ENCODE measurements at regions of chr2 and their contacts with region 1.

Region 1: DNA sequence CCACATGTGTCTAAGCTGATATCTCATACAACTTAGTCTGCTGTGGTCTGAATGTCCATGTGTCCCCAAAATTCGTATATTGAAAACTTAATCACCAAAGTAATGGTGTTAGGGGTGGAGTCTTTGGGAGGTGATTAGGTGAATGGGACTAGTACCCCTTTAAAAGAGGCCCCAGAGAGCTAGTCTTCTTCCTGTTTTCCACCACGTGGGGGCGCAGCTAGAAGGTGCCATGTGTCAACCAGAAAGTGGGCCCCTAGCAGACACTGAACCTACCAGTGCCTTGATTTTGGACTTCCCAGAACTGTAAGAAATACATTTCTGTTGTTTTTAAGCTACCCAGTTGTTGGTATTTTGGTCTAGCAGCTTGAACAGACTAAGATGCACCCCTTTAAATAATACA is 86.6 kb downstream of the ASB1 start:
- DNase-seq: peak; percentile 30
- H3K4me3 ChIP-seq: no peak overlapping the region
- H3K27ac ChIP-seq: no peak overlapping the region
- H3K4me1 ChIP-seq: no peaks in the 10 kb centered on the region
- H3K27me3 ChIP-seq: no peaks in the 10 kb centered on the region
- CTCF ChIP-seq: no peak

Region 2: GRCh38 chr2:238346544-238346943 is 166.8 kb before region 1 on chr2:
- intact Hi-C with region 1: no loop called
- DNase-seq: peak; percentile 10
- H3K4me3 ChIP-seq: no peak overlapping the region
- H3K27ac ChIP-seq: no peak overlapping the region
- H3K4me1 ChIP-seq: no peaks in the 10 kb centered on the region
- H3K27me3 ChIP-seq: no peaks in the 10 kb centered on the region
- CTCF ChIP-seq: no peak

Region 3: DNA sequence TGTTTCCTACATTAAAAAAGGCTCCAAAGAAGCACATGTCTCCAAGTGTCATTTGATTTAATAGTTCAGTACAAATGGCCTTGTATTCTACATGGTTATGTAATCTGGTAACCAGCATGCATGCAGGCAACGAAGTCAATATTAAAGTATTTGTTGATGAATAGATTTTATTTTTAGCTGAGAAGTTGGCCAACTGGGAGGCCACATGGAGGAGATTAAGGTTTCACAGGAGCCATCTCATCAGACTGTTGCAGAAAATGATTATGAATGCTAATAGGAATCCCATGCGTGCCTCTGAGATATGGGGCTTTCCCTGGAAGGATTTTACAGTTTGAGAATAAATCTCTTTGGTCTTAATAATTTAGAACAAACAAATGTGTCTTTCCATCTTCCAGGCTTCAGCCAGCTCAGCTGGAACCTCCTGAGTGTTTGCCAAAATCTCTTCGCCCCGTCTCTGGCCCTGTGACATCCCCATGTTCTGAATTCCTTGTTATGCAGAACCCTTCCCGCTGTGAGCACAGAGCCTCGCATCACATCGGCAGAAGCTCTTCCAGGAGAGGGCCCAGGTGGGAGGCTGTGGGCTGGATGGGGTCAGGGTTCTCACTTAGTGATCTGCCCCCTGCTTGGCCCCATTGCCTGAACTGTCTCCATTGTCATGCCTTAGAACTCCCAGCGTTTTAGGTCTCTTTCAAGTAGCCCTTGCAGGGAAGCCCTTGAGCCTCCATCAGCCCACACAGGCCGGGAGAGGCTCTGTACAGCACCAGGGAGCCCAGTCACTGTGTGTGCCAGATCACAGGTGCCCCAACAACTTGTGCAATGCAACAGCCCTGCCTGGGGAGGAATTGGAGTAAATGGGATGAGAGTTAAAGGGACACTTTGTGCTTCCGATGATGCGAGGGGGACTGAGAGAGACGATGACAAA is 144.0 kb after region 1 on chr2:
- intact Hi-C with region 1: no loop called
- DNase-seq: no peak
- H3K4me3 ChIP-seq: no peak overlapping the region
- H3K27ac ChIP-seq: no peak overlapping the region
- H3K4me1 ChIP-seq: no peaks in the 10 kb centered on the region
- H3K27me3 ChIP-seq: no peaks in the 10 kb centered on the region
- CTCF ChIP-seq: no peak

Region 4: GRCh38 chr2:238784671-238785527 is 271.6 kb after region 1 on chr2:
- intact Hi-C with region 1: loop called (anchors 10 kb)
- DNase-seq: peak; percentile 56
- H3K4me3 ChIP-seq: no peak overlapping the region
- H3K27ac ChIP-seq: no peak overlapping the region
- H3K4me1 ChIP-seq: no peaks in the 10 kb centered on the region
- H3K27me3 ChIP-seq: no peaks in the 10 kb centered on the region
- CTCF ChIP-seq: peak; percentile 90